Left ventricle myocardium superior (tissue), 1 donor: ENCODE measurements at regions of chr1 and their contacts with region 1.

Region 1: GRCh38 chr1:200620273-200621131 is at the start of gene KIF14:
- DNase-seq: peak; percentile 94
- ATAC-seq: peak; percentile 100
- total RNA-seq, gene KIF14: 0.10 TPM

Region 2: GRCh38 chr1:200802865-200803512 is 182.5 kb after region 1 on chr1:
- intact Hi-C with region 1: loop called (anchors 2 kb)
- DNase-seq: peak; percentile 70
- ATAC-seq: peak; percentile 82

Region 3: GRCh38 chr1:200837931-200838571 is 217.5 kb after region 1 on chr1:
- intact Hi-C with region 1: loop called (anchors 10 kb)
- DNase-seq: no peak
- ATAC-seq: no peak